ENCODE measurements at regions of chr2 and their contacts with region 1.

Region 1: DNA sequence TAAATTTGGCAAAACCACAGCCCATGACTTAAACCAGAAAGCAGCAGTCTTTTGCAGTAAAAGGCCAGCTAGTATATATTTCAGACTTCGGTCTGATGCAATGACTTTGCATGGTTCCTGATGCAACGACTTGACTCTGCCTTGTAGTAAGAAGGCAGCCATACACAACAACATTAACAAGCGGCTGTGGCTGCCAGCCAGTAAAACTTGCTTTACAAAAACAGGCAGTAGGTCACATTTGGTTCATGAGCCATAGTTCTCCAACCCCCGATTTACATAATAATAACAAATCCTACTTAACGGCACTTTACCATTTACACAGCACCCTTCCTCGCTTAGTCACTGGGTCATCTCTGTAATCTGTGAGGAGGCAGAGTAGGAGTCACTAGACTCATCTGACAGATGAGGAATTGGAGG is 410.3 kb downstream of the LRATD1 start:
- DNase-seq: peak; percentile 89
- H3K4me3 Mint-ChIP-seq: no peak overlapping the region
- H3K27ac Mint-ChIP-seq: no peak overlapping the region
- H3K4me1 Mint-ChIP-seq: peaks cover 6% of the 10 kb centered on the region
- H3K27me3 Mint-ChIP-seq: no peaks in the 10 kb centered on the region
- CTCF ChIP-seq: no peak

Region 2: DNA sequence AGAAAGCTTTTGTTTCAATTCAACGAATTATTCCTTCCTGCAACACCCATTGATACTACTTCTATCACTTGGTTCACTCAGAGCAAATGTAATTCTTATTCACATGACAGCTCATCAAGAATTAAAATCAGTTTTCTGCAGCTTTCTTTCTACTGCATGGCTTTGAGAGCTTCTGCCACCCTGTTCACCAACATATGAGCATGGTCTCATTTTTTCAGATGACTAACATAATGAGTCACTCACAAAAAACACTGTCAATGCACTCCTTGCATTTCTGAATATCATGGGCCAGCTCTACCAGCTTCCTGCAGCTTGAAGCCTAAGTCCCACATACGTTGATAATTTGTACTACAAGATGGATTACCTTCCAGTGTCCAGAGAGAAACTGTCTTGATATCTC is 67.4 kb before region 1 on chr2:
- CTCF ChIA-PET with region 1: no interaction called
- POLR2A ChIA-PET with region 1: no interaction called
- intact Hi-C with region 1: loop called (anchors 5 kb)
- DNase-seq: peak; percentile 55
- H3K4me3 Mint-ChIP-seq: no peak overlapping the region
- H3K27ac Mint-ChIP-seq: no peak overlapping the region
- H3K4me1 Mint-ChIP-seq: peaks cover 16% of the 10 kb centered on the region
- H3K27me3 Mint-ChIP-seq: no peaks in the 10 kb centered on the region
- CTCF ChIP-seq: no peak

Region 3: DNA sequence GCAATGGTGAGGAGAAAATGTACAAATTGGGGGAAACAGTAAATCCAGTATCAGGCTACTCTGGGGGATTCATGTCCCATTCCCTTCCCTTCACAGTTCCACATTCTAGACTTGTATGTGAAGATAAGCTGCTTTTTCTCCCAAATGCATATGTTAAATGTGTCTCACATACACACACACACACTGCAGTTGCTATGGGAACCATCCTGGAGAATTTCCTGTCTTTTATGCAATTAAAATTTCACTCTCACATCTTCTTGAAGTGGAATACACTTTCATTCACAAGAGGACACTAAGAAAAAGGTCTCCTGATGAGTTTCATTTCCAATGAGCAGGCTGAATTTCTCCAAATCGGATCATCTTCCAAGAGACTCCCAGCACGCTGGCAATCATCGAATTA is 44.3 kb before region 1 on chr2:
- CTCF ChIA-PET with region 1: no interaction called
- POLR2A ChIA-PET with region 1: no interaction called
- intact Hi-C with region 1: no loop called
- DNase-seq: no peak
- H3K4me3 Mint-ChIP-seq: no peak overlapping the region
- H3K27ac Mint-ChIP-seq: no peak overlapping the region
- H3K4me1 Mint-ChIP-seq: no peaks in the 10 kb centered on the region
- H3K27me3 Mint-ChIP-seq: no peaks in the 10 kb centered on the region
- CTCF ChIP-seq: no peak

Region 4: DNA sequence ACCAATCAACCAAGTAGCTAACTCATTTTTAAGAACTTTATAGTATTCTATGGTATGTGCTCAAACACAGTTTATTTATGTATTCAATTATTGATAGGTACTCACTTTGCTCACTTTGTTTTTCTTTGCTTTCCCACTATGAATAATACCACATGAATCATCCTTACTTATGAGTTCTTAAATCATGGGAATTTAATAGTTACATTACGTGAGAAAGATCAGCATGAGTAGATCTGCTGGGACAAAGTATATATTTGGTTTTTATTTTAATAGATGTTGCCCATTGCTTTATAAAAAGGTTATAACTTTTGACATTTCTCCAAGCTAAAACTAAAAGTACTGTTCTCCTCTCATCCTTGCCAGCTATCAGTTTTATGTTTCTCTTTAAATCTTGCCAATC is 19.6 kb before region 1 on chr2:
- CTCF ChIA-PET with region 1: no interaction called
- POLR2A ChIA-PET with region 1: no interaction called
- intact Hi-C with region 1: no loop called
- DNase-seq: peak; percentile 12
- H3K4me3 Mint-ChIP-seq: no peak overlapping the region
- H3K27ac Mint-ChIP-seq: no peak overlapping the region
- H3K4me1 Mint-ChIP-seq: no peaks in the 10 kb centered on the region
- H3K27me3 Mint-ChIP-seq: no peaks in the 10 kb centered on the region
- CTCF ChIP-seq: no peak